ENCODE measurements at regions of chr14 and their contacts with region 1.

Region 1: DNA sequence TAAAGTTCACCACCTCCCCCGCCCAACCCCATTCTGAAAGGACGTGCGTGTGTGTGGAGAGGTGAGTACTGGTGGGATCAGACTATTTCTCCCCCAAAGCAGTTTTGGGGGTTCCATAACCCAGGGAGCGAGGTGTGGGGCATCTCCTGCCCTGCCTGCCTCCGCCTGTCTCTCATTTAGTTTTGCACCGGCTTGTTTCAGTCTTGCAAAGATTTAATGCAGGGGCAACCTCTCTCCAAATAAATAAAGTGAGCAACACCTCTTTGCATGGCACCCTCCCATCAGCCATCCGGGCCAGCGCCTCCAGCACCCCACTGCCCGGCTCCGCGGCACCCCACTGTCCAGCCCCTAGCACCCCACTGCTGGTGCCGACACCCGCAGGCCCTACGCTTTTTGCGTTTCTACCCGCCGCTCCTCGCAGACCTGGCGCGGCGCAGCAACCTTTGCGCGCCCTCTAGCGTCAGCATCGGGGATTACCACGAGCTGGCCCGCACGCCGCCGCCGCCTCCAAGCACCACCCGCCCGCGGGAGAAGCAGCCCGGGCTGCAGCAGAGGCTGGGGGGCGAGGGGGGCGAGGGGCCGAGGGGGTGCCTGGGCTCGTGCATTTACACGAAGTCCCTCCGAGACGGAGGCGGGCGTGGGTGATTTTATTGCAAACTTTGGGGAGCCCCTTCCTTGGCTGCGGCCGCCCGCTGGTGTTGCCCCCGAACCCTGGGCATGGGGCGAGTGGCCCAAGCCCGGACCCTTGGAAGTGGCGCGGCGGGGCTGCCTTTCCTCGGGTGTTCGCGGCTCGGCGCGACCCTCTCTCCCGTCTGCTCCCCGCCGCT is 55.8 kb upstream of the VRK1 start:
- DNase-seq: peak; percentile 37 to 84 (median 54)
- ATAC-seq: peak in 3 of 4 donors; percentile 62 to 85 (median 77)
- H3K4me3 ChIP-seq: peak overlapping the region in 10 of 12 donors; percentile 19 to 53 (median 42)
- H3K27ac ChIP-seq: no peak overlapping the region
- H3K4me1 ChIP-seq: peaks cover 0 to 10% (median 6%) of the 10 kb centered on the region in 12 donors
- H3K27me3 ChIP-seq: peaks cover 0 to 90% (median 30%) of the 10 kb centered on the region in 9 donors
- CTCF ChIP-seq: peak; percentile 72 to 95 (median 88)
- POLR2A ChIP-seq: no peak

Region 2: GRCh38 chr14:96588410-96589257 is 152.7 kb before region 1 on chr14:
- intact Hi-C with region 1: loop called in 2 of 10 experiments (anchors 5 kb)
- DNase-seq: no peak
- ATAC-seq: no peak
- H3K4me3 ChIP-seq: no peak overlapping the region
- H3K27ac ChIP-seq: no peak overlapping the region
- H3K4me1 ChIP-seq: peaks cover 0 to 19% (median 8%) of the 10 kb centered on the region in 12 donors
- H3K27me3 ChIP-seq: peaks cover 0 to 58% (median 7%) of the 10 kb centered on the region in 9 donors
- CTCF ChIP-seq: no peak
- POLR2A ChIP-seq: no peak

Region 3: DNA sequence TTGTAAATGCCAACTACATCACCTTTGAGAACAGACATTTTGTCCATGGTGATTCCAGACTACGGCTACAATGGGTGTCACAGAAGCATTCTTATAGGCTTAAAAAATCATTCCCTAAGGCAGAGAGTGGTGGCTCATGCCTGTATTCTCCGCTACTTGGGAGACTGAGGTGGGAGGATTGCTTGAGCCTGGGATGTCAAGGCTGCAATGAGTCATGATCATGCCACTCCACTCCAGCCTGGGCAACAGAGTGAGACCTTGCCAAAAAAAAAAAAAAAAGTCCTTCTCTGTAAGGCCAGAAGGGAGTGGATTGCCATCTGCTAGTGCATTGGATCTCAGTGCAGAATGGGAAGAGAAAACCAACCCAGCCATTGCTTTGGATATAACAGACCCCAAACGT is 578.3 kb after region 1 on chr14:
- intact Hi-C with region 1: no loop called
- DNase-seq: no peak
- ATAC-seq: no peak
- H3K4me3 ChIP-seq: no peak overlapping the region
- H3K27ac ChIP-seq: no peak overlapping the region
- H3K4me1 ChIP-seq: no peaks in the 10 kb centered on the region
- H3K27me3 ChIP-seq: no peaks in the 10 kb centered on the region
- CTCF ChIP-seq: no peak
- POLR2A ChIP-seq: no peak

Measured in heart left ventricle (tissue), 16 donors.